Adrenal gland (tissue), 19 donors: ENCODE measurements at regions of chr19 and their contacts with region 1.

Region 1: DNA sequence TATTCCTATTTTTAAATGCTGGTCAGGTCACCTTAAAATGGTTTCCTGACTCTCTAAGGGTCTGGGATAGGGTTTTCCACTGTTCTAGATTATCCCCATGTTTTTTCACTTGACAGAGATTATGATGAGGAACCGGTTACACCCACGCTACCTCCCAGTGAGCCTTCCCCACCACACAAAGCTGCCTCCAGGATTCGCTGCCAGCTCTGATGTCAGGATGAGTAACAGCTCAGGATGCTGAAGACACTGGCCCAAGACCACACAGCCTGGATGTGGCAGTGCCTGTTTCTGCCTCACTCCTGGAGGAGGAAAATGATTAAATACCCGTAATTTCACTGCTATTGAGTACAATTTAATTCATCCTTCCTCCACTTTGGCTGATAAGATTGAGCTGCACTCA is 22.9 kb downstream of the ZNF114 start:
- DNase-seq: no peak
- H3K4me3 ChIP-seq: no peak overlapping the region
- H3K27ac ChIP-seq: no peak overlapping the region
- H3K4me1 ChIP-seq: peaks cover 7 to 11% of the 10 kb centered on the region in 2 donors
- H3K27me3 ChIP-seq: no peaks in the 10 kb centered on the region
- CTCF ChIP-seq: no peak
- POLR2A ChIP-seq: no peak

Region 2: DNA sequence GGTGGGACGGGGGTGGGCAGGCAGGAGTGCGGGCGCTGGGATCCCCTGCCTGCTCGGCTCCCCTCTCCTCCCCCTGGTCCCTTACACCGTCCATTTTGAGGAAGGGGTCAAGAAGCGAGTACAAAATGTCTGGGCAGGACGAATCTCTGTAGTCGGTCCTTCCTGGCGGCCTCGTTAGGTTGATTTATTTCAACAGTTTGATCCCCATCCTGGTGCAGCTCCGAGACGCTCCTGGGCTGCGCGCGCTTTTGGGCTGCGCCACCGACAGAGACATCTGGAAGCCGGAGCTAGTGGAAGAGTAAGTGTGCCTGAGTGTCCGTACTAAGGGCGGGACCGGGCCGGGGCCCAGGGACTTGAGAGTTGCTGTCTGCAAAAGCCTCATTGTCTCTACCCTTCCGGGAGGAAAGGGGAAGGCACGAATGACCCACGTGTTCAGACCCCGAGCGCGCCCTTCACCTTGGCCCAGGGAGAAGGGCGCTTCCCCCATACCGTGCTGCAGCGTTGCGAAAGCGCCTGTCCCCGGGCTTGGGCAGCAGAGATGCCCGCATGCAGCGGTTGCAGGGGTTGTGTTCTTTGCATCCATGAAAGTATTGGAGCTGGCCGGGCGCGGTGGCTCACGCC is 21.2 kb before region 1 on chr19:
- intact Hi-C with region 1: loop called in 1 of 2 experiments (anchors 2 kb)
- DNase-seq: peak in 5 of 7 donors; percentile 31 to 55 (median 35)
- H3K4me3 ChIP-seq: peak overlapping the region in 2 of 4 donors; percentile 11 to 52
- H3K27ac ChIP-seq: peak overlapping the region in 3 of 5 donors; percentile 17 to 42 (median 30)
- H3K4me1 ChIP-seq: peaks cover 0 to 11% of the 10 kb centered on the region in 2 donors
- H3K27me3 ChIP-seq: no peaks in the 10 kb centered on the region
- CTCF ChIP-seq: no peak
- POLR2A ChIP-seq: no peak